GM10248 (cell line): ENCODE measurements at regions of chr2 and their contacts with region 1.

Region 1: DNA sequence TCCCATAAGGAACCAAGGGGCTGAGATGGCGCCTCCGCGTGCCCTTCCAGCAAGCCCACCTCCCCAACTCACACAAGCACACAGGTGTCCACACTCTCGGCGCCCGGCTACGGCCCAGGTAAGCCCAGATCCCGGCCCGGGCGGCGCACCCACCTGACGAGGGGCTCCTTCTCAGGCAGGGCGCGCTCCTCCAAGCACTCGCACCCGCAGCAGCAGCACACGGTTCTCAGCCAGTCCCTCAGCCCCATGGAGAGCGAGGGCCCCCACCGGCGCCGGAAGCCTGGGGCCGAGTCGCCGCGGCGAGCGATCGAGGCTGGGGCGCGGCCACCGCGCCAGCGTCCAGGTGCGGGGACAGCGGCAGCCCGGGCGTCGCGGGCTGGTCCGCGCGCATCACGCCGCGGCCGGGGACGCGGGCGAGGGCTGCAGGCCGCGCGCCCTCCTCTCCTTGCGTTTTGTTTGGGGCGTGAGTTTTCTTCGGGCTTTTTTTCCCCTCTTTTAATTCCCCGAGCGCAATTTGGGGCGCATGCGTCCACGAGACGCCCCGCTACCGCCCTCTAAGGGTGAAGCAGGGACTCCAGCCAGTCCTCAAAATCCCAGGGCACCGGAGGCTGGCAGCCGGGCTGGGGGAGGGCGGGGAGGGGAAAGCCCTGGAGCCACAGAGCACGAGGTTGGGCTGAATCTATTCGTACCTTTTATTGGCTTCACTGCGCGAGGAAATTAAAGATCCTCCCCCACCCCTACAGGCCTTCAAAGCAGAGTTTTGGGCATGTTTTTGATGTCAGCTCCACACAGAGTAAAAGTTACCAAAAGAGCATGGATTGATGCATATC is at the start of gene MREG:
- DNase-seq: peak; percentile 88
- CTCF ChIP-seq: peak; percentile 88

Region 2: DNA sequence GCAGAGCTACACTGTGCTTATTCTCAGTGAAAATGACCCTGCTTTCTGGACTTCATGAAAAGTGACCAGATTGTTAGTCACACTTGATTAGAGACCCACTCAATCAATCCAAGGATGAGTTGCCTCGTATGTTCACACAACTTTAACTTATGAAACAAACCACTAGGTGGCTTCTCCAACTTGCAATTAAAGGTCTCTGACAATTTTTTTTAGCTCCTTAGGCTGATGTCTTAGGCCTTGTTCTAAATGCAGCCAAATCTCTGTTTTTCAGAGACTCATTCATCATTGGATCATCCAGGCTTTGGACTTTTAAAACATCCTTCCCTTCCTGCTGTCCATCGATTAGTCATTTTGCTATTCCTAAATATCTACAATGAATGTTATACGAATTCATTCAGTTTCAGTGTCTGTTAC is 63.3 kb before region 1 on chr2:
- CTCF ChIA-PET with region 1: interaction called, 11 read pairs
- POLR2A ChIA-PET with region 1: no interaction called
- DNase-seq: peak; percentile 41
- CTCF ChIP-seq: peak; percentile 38

Region 3: GRCh38 chr2:216081487-216082116 is 68.3 kb after region 1 on chr2 and contains the starts of genes PECR and TMEM169:
- CTCF ChIA-PET with region 1: no interaction called
- POLR2A ChIA-PET with region 1: no interaction called
- DNase-seq: peak; percentile 93
- CTCF ChIP-seq: no peak

Region 4: GRCh38 chr2:216098421-216099334 is 85.4 kb after region 1 on chr2:
- CTCF ChIA-PET with region 1: no interaction called
- POLR2A ChIA-PET with region 1: no interaction called
- DNase-seq: no peak
- CTCF ChIP-seq: no peak